Thyroid gland (tissue), 4 donors: ENCODE measurements at regions of chr7 and their contacts with region 1.

Region 1: GRCh38 chr7:37833107-37833817 is 15.1 kb upstream of the NME8 start:
- DNase-seq: peak; percentile 35 to 44
- H3K4me3 ChIP-seq: no peak overlapping the region
- H3K27ac ChIP-seq: no peak overlapping the region
- H3K4me1 ChIP-seq: peaks cover 0 to 11% of the 10 kb centered on the region in 2 donors
- H3K27me3 ChIP-seq: no peaks in the 10 kb centered on the region
- CTCF ChIP-seq: peak; percentile 46 to 77 (median 52)
- POLR2A ChIP-seq: no peak

Region 2: GRCh38 chr7:37201003-37201875 is 632.0 kb before region 1 on chr7:
- intact Hi-C with region 1: loop called (anchors 10 kb)
- DNase-seq: peak; percentile 81 to 86
- H3K4me3 ChIP-seq: no peak overlapping the region
- H3K27ac ChIP-seq: peak overlapping the region; percentile 13 to 75 (median 61)
- H3K4me1 ChIP-seq: peaks cover 18 to 32% of the 10 kb centered on the region in 2 donors
- H3K27me3 ChIP-seq: no peaks in the 10 kb centered on the region
- CTCF ChIP-seq: peak; percentile 75 to 87 (median 82)
- POLR2A ChIP-seq: no peak

Region 3: GRCh38 chr7:37225285-37225969 is 607.8 kb before region 1 on chr7:
- intact Hi-C with region 1: loop called (anchors 5 kb)
- DNase-seq: no peak
- H3K4me3 ChIP-seq: no peak overlapping the region
- H3K27ac ChIP-seq: no peak overlapping the region
- H3K4me1 ChIP-seq: peaks cover 18 to 25% of the 10 kb centered on the region in 2 donors
- H3K27me3 ChIP-seq: no peaks in the 10 kb centered on the region
- CTCF ChIP-seq: no peak
- POLR2A ChIP-seq: no peak

Region 4: DNA sequence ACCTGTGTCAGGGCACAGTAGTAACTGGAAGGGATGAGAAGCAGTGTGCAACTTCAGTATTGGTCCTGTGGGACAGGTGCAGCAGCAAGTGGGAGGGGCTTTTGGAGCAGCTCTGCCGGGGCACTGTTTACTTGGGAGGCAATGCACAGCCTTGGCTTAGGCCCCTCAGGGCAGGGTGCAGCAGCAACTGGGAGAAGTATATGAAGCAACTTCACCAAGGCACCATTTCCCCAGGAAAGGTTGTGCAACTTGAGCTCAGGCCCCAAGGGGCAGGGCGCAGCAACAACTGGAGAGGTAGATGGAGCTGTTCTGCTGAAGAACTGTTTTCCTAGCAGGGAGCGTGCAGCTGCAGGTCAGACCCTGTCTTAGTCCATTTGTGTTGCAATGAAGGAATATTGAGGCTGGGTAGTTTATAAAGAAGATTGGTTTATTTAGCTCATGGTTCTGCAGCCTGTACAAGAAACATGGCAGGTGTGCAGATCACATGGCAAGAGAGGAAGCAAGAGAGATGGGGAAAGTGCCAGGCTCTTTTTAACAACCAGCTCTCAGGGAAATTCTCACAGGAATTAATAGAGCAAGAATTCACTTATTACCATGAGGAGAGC is 139.0 kb before region 1 on chr7:
- intact Hi-C with region 1: no loop called
- DNase-seq: peak in 1 of 2 donors; percentile 4
- H3K4me3 ChIP-seq: no peak overlapping the region
- H3K27ac ChIP-seq: no peak overlapping the region
- H3K4me1 ChIP-seq: peaks cover 0 to 3% of the 10 kb centered on the region in 2 donors
- H3K27me3 ChIP-seq: no peaks in the 10 kb centered on the region
- CTCF ChIP-seq: no peak
- POLR2A ChIP-seq: no peak